Activated CD4-positive, alpha-beta T cell treated with anti-CD3 and anti-CD28 coated beads, Interleukin-2, amount 10 ng/mL, durations not matched to agents 24 days and 14 days (primary cell): ENCODE measurements at regions of chr17 and their contacts with region 1.

Region 1: DNA sequence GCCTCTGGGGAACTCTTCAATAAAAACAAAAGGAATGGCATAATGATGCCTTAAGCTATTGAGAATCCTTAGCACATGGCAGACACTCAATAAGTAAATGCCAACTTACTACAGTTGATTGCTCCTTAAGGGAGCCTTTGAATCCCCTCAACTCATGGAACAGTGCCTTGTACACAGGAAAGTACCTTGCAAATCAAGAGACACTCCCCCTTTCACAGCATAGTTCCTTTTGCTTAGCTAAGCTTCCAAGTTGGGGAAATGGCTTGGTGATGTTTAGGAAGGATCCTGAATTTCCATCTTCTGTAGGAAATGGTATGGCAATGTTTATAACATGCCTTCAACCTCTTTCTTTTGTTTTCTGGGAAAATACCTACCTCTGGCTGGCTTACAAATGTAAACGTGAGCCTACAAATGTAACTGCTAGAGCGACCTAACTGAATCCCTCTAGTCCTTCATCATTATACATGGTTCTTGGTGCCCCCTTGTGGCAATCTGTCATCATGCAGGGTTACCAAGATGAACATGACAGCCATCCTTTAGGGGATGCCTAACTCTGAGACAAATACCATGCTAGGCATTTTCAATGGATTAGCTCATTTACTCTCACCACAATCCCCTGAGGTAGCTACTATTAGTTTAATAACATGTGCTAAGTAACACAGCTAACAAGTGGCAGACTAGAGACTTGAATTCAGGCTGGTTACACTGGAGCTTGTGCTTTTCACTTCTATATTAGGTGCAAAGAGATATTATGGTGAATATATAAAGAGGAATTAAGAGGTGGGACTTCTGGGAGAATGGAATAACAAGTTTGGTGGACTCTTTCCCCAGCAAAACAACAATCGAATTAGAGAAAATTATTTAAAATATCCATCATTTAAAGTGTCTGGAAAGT is 65.0 kb downstream of the MMD start:
- DNase-seq: peak; percentile 92
- H3K4me3 Mint-ChIP-seq: no peak overlapping the region
- H3K27ac Mint-ChIP-seq: no peak overlapping the region
- H3K4me1 Mint-ChIP-seq: peaks cover 4% of the 10 kb centered on the region
- H3K27me3 Mint-ChIP-seq: peaks cover 33% of the 10 kb centered on the region

Region 2: GRCh38 chr17:55200904-55201303 is 155.8 kb before region 1 on chr17:
- intact Hi-C with region 1: no loop called
- DNase-seq: no peak
- H3K4me3 Mint-ChIP-seq: no peak overlapping the region
- H3K27ac Mint-ChIP-seq: no peak overlapping the region
- H3K4me1 Mint-ChIP-seq: no peaks in the 10 kb centered on the region
- H3K27me3 Mint-ChIP-seq: peaks cover 15% of the 10 kb centered on the region

Region 3: DNA sequence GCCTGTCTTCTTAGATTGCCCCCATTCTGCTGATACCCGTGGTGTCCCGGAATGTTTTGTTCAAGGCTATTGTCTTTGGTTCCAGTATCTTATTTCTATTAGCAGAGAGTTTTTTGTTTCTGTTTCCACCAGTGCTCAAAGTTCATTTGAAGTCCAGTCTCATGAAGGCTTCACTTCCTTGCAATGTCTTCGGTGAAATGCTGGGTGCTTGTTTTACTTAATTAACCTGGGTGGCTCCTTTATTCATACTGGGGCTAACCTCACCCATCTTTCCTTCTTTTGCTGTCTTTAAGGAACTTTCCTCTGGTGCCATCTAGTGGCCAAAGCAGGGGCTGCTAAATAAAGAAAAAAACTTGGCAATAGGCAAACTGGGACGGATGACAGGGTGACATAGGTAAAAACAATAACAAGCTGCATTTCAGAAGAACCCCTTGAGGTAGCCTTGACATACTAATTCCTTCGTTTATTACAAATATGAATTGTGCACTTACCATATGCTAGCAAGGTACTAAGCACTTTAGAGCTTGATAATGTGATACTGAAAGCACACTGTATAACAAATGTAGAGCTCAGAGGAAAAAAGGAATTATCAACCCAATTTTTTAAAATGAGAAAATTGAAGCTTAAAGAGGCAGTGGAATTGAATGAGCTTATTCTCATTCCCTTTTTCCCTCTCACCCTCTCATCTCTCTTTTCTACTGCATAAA is 157.4 kb after region 1 on chr17:
- intact Hi-C with region 1: loop called (anchors 5 kb)
- DNase-seq: peak; percentile 92
- H3K4me3 Mint-ChIP-seq: no peak overlapping the region
- H3K27ac Mint-ChIP-seq: no peak overlapping the region
- H3K4me1 Mint-ChIP-seq: peaks cover 3% of the 10 kb centered on the region
- H3K27me3 Mint-ChIP-seq: peaks cover 8% of the 10 kb centered on the region